ENCODE measurements at regions of chr3 and their contacts with region 1.

Region 1: GRCh38 chr3:81485444-81485865 is 276.0 kb downstream of the GBE1 start:
- DNase-seq: peak in 2 of 14 experiments; percentile 1 to 10
- ATAC-seq: no peak
- H3K4me3 ChIP-seq: no peak overlapping the region
- H3K4me3 Mint-ChIP-seq: no peak overlapping the region
- H3K27ac ChIP-seq: no peak overlapping the region
- H3K27ac Mint-ChIP-seq: no peak overlapping the region
- H3K4me1 ChIP-seq: no peaks in the 10 kb centered on the region
- H3K4me1 Mint-ChIP-seq: no peaks in the 10 kb centered on the region
- H3K27me3 ChIP-seq: no peaks in the 10 kb centered on the region
- H3K27me3 Mint-ChIP-seq: no peaks in the 10 kb centered on the region
- CTCF ChIP-seq: no peak

Region 2: DNA sequence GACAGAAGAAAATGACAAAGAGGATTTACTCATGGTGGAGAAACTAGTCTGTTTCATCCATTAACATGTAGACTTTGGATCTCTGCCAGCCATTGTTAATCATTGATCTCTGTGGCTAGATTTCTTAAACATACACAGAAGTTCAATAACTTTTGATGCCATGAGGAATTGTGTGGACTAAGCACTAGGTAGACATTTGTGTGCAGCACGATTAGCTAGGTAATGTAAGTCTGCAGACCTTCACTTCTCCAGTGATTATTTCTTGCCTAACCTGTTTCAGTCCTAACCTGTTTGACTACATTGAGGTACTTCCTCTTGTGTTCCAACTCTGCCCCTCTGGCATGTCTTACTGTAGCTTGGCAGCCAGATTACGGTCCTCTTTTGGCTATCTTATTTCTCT is 789.2 kb before region 1 on chr3:
- CTCF ChIA-PET with region 1: no interaction called
- POLR2A ChIA-PET with region 1: no interaction called
- intact Hi-C with region 1: no loop called
- DNase-seq: no peak
- ATAC-seq: no peak
- H3K4me3 ChIP-seq: no peak overlapping the region
- H3K4me3 Mint-ChIP-seq: no peak overlapping the region
- H3K27ac ChIP-seq: no peak overlapping the region
- H3K27ac Mint-ChIP-seq: no peak overlapping the region
- H3K4me1 ChIP-seq: no peaks in the 10 kb centered on the region
- H3K4me1 Mint-ChIP-seq: no peaks in the 10 kb centered on the region
- H3K27me3 ChIP-seq: no peaks in the 10 kb centered on the region
- H3K27me3 Mint-ChIP-seq: no peaks in the 10 kb centered on the region
- CTCF ChIP-seq: no peak

Region 3: DNA sequence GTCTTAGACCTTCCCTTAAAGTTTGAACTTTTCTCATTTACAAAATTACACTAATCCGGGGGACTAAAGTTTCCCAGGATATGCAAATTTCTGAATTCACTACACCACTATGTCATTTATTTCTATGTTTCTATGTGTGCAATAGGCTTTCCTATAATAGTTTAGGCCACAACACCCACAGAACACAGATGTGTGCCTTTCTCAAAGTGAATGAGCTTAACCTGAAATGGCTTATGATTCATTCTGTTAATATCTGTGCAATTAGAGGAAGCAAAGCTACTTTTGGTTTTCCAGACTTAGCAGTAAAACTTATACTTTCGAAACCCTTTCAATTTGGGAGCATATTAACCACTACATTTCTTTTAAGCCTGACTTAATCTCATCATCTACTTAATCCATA is 472.1 kb before region 1 on chr3:
- CTCF ChIA-PET with region 1: no interaction called
- POLR2A ChIA-PET with region 1: no interaction called
- intact Hi-C with region 1: no loop called
- DNase-seq: no peak
- ATAC-seq: no peak
- H3K4me3 ChIP-seq: no peak overlapping the region
- H3K4me3 Mint-ChIP-seq: no peak overlapping the region
- H3K27ac ChIP-seq: no peak overlapping the region
- H3K27ac Mint-ChIP-seq: no peak overlapping the region
- H3K4me1 ChIP-seq: no peaks in the 10 kb centered on the region
- H3K4me1 Mint-ChIP-seq: no peaks in the 10 kb centered on the region
- H3K27me3 ChIP-seq: no peaks in the 10 kb centered on the region
- H3K27me3 Mint-ChIP-seq: no peaks in the 10 kb centered on the region
- CTCF ChIP-seq: no peak

Region 4: DNA sequence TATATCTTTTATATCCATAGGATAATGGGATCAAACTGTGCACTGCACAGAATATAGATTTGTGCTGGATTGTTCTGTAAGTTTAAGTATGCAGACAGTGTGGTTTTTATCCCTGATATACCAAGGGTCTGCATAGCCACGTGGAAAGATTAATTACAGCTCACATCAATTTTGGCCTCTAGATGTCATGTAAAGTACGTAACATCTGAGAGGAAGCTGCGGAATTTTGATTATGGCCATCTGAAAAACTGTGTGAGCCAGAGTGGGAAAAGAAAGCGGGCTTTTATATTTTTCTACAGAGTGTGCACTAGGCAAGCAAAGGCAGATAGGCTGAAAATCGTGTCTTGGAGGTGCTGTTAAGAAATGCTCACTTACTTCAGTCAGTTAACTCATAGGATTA is 286.7 kb before region 1 on chr3:
- CTCF ChIA-PET with region 1: no interaction called
- POLR2A ChIA-PET with region 1: no interaction called
- intact Hi-C with region 1: no loop called
- DNase-seq: no peak
- ATAC-seq: no peak
- H3K4me3 ChIP-seq: no peak overlapping the region
- H3K4me3 Mint-ChIP-seq: no peak overlapping the region
- H3K27ac ChIP-seq: no peak overlapping the region
- H3K27ac Mint-ChIP-seq: no peak overlapping the region
- H3K4me1 ChIP-seq: no peaks in the 10 kb centered on the region
- H3K4me1 Mint-ChIP-seq: no peaks in the 10 kb centered on the region
- H3K27me3 ChIP-seq: no peaks in the 10 kb centered on the region
- H3K27me3 Mint-ChIP-seq: no peaks in the 10 kb centered on the region
- CTCF ChIP-seq: no peak

Region 5: DNA sequence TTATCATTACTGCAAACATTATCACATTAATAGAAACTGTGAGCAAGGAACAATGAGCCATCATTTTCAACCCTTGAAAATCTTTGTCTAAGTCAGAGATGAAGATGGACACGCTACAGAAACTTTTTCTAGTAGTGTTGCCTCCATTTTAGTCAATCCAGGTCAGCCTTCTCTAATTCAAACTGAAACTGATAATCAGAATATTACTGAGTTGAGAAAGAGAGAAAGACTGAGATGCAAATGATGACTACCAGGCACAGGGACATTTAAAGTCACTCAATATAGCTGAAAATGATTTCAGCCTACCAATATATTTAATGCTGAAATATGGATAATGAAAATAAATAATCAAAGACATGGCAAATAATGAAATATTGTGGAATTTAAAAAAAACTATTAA is 14.6 kb after region 1 on chr3:
- CTCF ChIA-PET with region 1: interaction called, 3 read pairs
- POLR2A ChIA-PET with region 1: no interaction called
- intact Hi-C with region 1: loop called in 1 of 2 experiments (anchors 1 kb)
- DNase-seq: no peak
- ATAC-seq: no peak
- H3K4me3 ChIP-seq: no peak overlapping the region
- H3K4me3 Mint-ChIP-seq: no peak overlapping the region
- H3K27ac ChIP-seq: no peak overlapping the region
- H3K27ac Mint-ChIP-seq: no peak overlapping the region
- H3K4me1 ChIP-seq: no peaks in the 10 kb centered on the region
- H3K4me1 Mint-ChIP-seq: no peaks in the 10 kb centered on the region
- H3K27me3 ChIP-seq: no peaks in the 10 kb centered on the region
- H3K27me3 Mint-ChIP-seq: no peaks in the 10 kb centered on the region
- CTCF ChIP-seq: no peak

Measured in CD4-positive, alpha-beta T cell (primary cell).